Activated T-helper 2 cell treated with anti-CD3 and anti-CD28 coated beads, Interferon-gamma antibody, Interleukin-2, Interleukin-4, amounts not matched to agents 10 μg/mL and 5 μg/mL and 100 μg/mL, durations not matched to agents 14 hours and 24 hours and 36 hours (primary cell): ENCODE measurements at regions of chr22 and their contacts with region 1.

Region 1: DNA sequence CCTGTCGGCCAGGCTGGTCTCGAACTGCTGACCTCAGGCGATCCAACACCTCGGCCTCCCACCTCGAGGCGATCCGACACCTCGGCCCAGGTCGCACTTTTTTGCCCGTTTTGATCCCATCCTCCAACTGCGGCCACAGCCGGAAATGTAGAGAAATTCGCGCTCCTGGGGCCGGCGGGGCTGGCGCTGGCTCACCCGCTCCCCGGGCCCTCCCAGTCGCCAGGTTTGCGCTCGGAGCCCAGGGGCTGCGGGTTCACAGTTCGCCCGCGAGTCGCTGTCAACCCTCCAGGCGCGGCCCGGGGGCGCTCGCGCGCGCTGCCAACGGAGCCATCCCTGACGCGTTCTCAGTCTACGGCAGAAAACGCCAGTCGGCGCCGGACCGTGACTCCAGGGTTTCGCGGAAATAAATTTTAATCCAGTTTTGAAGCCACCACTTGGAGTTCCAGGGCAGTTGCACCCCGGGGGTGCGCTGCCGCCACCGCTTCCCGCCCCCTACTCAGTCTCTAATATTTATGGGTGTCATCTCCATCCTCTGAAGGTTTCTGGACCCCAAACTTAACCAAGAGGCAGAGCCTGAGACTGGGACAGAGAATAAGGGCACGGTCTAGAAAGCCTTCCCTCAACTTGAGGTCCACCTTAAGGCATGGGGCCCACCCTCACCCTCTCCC is 1.5 kb upstream of the KLHDC7B start:
- DNase-seq: peak; percentile 73
- H3K4me3 Mint-ChIP-seq: peak overlapping the region; percentile 21
- H3K27ac Mint-ChIP-seq: peak overlapping the region; percentile 22
- H3K4me1 Mint-ChIP-seq: peaks cover 53% of the 10 kb centered on the region
- H3K27me3 Mint-ChIP-seq: no peaks in the 10 kb centered on the region

Region 2: DNA sequence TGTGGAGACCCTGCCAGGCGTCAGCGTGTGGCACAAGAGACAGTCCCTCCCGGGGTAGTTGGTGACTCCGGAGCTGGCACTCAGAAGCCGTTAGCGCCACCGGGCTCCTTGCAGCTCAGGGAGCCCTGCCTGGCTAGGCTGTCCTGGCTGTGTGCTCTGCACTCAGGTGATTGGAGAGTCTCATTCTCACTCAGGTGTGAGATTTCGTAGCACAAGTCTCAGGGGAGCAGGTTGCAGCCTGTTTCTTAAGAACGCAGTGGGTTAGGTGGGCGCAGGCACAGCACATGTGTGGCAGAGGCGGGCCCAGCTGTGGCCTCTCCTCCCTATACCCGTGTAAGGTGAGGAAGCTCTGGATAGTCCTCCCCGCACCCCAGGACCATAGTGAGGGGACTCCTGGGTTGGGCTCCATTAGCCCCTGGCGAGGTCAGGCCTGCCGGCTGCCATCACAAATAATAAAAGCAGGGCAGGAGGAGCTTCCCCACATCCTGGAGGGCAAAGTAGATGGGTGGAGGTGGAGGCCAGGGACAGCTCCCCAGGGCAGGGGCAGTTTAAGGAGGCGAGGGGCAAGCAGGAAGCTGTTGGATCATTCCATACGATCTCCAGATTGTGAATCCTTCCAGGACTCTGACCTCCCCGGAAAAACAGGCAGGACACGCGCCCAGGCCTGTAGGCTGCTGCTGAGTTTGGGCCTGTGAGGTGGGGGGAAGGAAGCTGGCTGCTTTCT is 108.8 kb before region 1 on chr22:
- intact Hi-C with region 1: no loop called
- DNase-seq: no peak
- H3K4me3 Mint-ChIP-seq: no peak overlapping the region
- H3K27ac Mint-ChIP-seq: no peak overlapping the region
- H3K4me1 Mint-ChIP-seq: no peaks in the 10 kb centered on the region
- H3K27me3 Mint-ChIP-seq: no peaks in the 10 kb centered on the region

Region 3: DNA sequence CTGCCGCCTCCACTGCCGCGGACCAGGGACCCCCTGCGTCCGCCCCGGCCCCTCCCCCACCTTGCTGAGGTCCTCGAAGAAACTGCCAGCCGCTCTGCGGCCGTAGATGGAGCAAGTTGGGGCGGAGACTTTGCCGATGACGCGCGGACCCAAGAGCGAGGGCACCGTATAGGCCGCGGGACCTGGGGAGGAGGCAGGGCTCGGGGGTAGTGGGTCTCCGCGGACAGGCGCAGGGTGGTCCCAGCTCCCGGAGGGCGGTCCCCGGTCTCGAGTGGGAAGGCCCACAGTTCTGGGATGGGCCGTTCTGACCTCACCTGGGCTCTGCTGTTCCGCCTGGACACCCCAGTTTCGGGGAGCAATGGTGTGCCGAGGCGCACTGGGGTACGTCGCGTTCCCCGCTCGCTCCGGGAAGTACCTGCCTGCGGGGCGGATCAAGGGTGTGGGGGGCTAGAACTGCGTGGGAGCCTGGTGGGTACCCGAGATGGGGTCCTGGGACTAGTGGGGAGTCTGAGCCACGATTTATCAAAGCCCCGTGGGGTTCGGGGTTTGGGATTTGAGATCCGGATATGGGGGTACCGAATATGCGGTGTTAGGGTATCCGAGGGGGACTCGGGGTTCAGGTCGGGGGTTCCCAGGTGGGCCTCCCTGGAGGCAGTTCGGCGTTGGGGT is 13.2 kb before region 1 on chr22:
- intact Hi-C with region 1: loop called (anchors 1 kb)
- DNase-seq: peak; percentile 83
- H3K4me3 Mint-ChIP-seq: peak overlapping the region; percentile 91
- H3K27ac Mint-ChIP-seq: peak overlapping the region; percentile 98
- H3K4me1 Mint-ChIP-seq: peaks cover 38% of the 10 kb centered on the region
- H3K27me3 Mint-ChIP-seq: no peaks in the 10 kb centered on the region

Region 4: GRCh38 chr22:50562523-50563412 is 18.6 kb after region 1 on chr22 and contains the start of gene SYCE3:
- intact Hi-C with region 1: loop called (anchors 2 kb)
- DNase-seq: peak; percentile 96
- H3K4me3 Mint-ChIP-seq: peak within 1 kb of the TSS; percentile 89
- H3K27ac Mint-ChIP-seq: peak within 1 kb of the TSS; percentile 66
- H3K4me1 Mint-ChIP-seq: peaks cover 16% of the 10 kb centered on the region
- H3K27me3 Mint-ChIP-seq: peaks cover 20% of the 10 kb centered on the region
- total RNA-seq, gene SYCE3: 0.62 TPM in 1 of 2 replicates, not detected in the other

Region 5: GRCh38 chr22:50572965-50573845 is 29.0 kb after region 1 on chr22:
- intact Hi-C with region 1: no loop called
- DNase-seq: no peak
- H3K4me3 Mint-ChIP-seq: no peak overlapping the region
- H3K27ac Mint-ChIP-seq: no peak overlapping the region
- H3K4me1 Mint-ChIP-seq: peaks cover 2% of the 10 kb centered on the region
- H3K27me3 Mint-ChIP-seq: no peaks in the 10 kb centered on the region

Region 6: GRCh38 chr22:50674606-50675549 is 130.7 kb after region 1 on chr22:
- intact Hi-C with region 1: no loop called
- DNase-seq: no peak
- H3K4me3 Mint-ChIP-seq: peak overlapping the region; percentile 30
- H3K27ac Mint-ChIP-seq: no peak overlapping the region
- H3K4me1 Mint-ChIP-seq: peaks cover 3% of the 10 kb centered on the region
- H3K27me3 Mint-ChIP-seq: peaks cover 45% of the 10 kb centered on the region